Caco-2 (cell line): ENCODE measurements at regions of chr11 and their contacts with region 1.

Region 1: GRCh38 chr11:101866619-101867491 is 48.0 kb upstream of the CEP126 start:
- DNase-seq: peak; percentile 89 to 91
- H3K4me3 ChIP-seq: no peak overlapping the region
- H3K4me3 Mint-ChIP-seq: peak overlapping the region; percentile 31
- H3K27ac Mint-ChIP-seq: peak overlapping the region; percentile 79
- H3K4me1 ChIP-seq: peaks cover 50% of the 10 kb centered on the region
- H3K4me1 Mint-ChIP-seq: peaks cover 34% of the 10 kb centered on the region
- H3K27me3 ChIP-seq: no peaks in the 10 kb centered on the region
- H3K27me3 Mint-ChIP-seq: no peaks in the 10 kb centered on the region
- CTCF ChIP-seq: no peak

Region 2: DNA sequence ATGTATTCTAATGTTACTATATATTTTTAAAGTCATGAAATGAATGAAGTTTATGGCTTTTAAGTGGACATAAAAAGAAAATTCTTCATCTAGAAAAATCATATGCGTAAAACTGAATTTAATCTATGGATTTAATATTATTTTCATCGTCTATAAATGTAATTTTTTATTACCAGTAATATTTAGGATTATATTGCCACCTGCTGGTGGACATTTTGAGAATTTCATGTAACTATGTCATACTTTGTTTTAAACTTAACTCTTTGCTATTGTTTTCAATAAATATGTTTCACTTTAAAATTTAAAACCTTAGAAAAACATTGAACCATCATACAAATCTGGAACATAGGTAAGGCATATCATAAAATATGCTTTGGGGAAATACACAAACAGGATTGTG is 18.6 kb before region 1 on chr11:
- CTCF ChIA-PET with region 1: interaction called, 11 read pairs
- POLR2A ChIA-PET with region 1: no interaction called
- intact Hi-C with region 1: no loop called
- DNase-seq: peak in 1 of 2 experiments; percentile 41
- H3K4me3 ChIP-seq: no peak overlapping the region
- H3K4me3 Mint-ChIP-seq: no peak overlapping the region
- H3K27ac Mint-ChIP-seq: no peak overlapping the region
- H3K4me1 ChIP-seq: no peaks in the 10 kb centered on the region
- H3K4me1 Mint-ChIP-seq: no peaks in the 10 kb centered on the region
- H3K27me3 ChIP-seq: no peaks in the 10 kb centered on the region
- H3K27me3 Mint-ChIP-seq: no peaks in the 10 kb centered on the region
- CTCF ChIP-seq: peak; percentile 24 to 62

Region 3: DNA sequence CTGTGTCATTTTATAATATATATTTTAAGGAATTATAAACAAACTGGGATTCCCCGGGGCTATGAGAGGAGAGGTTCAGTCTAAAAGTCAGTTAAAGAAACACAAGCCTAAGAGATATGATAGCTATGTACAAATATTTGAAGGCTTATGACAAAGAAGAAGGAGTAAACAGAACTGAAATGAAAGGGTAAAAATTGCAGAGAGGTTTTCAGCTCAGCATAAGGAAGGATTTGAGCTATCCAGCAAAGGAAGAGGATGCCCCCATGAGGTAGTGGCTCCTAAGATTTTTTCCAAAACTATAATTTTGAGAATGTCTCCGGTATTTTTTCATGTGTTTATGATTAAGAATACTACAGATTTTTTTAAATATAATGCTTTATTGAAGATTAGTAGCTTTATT is 107.4 kb after region 1 on chr11:
- CTCF ChIA-PET with region 1: interaction called, 23 read pairs
- POLR2A ChIA-PET with region 1: no interaction called
- intact Hi-C with region 1: loop called (anchors 1 kb)
- DNase-seq: peak in 1 of 2 experiments; percentile 65
- H3K4me3 ChIP-seq: no peak overlapping the region
- H3K4me3 Mint-ChIP-seq: peak overlapping the region; percentile 45
- H3K27ac Mint-ChIP-seq: peak overlapping the region; percentile 43
- H3K4me1 ChIP-seq: peaks cover 22% of the 10 kb centered on the region
- H3K4me1 Mint-ChIP-seq: peaks cover 14% of the 10 kb centered on the region
- H3K27me3 ChIP-seq: no peaks in the 10 kb centered on the region
- H3K27me3 Mint-ChIP-seq: no peaks in the 10 kb centered on the region
- CTCF ChIP-seq: peak; percentile 39 to 72

Region 4: GRCh38 chr11:102192349-102193066 is 325.7 kb after region 1 on chr11:
- CTCF ChIA-PET with region 1: interaction called, 3 read pairs
- POLR2A ChIA-PET with region 1: interaction called, 5 read pairs
- intact Hi-C with region 1: loop called (anchors 1 kb)
- DNase-seq: peak; percentile 92 to 93
- H3K4me3 ChIP-seq: no peak overlapping the region
- H3K4me3 Mint-ChIP-seq: peak overlapping the region; percentile 20
- H3K27ac Mint-ChIP-seq: peak overlapping the region; percentile 25
- H3K4me1 ChIP-seq: peaks cover 71% of the 10 kb centered on the region
- H3K4me1 Mint-ChIP-seq: peaks cover 56% of the 10 kb centered on the region
- H3K27me3 ChIP-seq: no peaks in the 10 kb centered on the region
- H3K27me3 Mint-ChIP-seq: no peaks in the 10 kb centered on the region
- CTCF ChIP-seq: no peak